WTC11 (cell line): ENCODE measurements at regions of chr4 and their contacts with region 1.

Region 1: DNA sequence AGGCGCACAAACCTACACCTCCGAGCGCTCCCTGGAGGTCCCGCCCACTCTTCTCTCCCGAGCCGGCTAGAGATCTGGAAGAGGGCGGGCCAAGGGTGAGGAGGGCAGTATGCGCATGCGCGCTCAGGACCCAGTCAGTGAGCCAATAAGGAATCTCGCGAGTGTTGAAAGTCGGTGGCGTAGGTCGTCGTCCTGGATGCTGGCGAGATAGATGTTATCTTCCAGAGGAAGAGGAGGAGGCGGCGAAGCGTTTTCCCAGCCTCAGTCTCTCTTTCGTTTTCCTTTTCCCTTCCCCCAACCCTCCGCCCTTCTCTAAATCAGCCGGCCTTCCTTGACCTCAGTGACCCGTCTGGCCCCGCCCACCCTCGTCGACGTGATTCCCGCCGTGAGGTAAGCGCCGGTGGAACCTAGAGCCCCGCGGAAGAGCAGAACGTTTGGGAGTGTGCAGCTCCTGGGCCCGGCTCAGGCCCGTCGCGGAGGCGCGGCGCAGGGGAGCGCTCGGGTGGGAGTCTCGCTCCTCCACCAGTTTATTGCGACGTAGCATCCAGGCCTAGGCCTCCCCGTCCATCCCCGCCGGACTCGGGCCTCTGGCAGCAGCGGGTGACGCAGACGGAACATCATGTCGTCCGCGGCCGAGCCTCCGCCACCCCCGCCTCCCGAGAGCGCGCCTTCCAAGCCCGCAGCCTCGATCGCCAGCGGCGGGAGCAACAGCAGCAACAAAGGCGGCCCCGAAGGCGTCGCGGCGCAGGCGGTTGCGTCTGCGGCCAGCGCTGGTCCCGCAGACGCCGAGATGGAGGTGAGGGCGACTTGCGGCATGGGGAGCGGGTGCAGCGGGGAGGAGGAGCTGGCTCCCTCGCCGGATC is at the start of gene SMARCA5:
- DNase-seq: peak; percentile 96
- ATAC-seq: peak; percentile 95
- H3K4me3 Mint-ChIP-seq: peak within 1 kb of the TSS; percentile 97
- H3K27ac Mint-ChIP-seq: peak within 1 kb of the TSS; percentile 99
- H3K4me1 Mint-ChIP-seq: peaks cover 18% of the 10 kb centered on the region
- H3K27me3 Mint-ChIP-seq: no peaks in the 10 kb centered on the region; the same call in 1 of the 2 replicates
- CTCF ChIP-seq: no peak
- total RNA-seq, gene SMARCA5: 89.6 to 98.8 TPM (median 91.1 TPM) in 3 replicates

Region 2: DNA sequence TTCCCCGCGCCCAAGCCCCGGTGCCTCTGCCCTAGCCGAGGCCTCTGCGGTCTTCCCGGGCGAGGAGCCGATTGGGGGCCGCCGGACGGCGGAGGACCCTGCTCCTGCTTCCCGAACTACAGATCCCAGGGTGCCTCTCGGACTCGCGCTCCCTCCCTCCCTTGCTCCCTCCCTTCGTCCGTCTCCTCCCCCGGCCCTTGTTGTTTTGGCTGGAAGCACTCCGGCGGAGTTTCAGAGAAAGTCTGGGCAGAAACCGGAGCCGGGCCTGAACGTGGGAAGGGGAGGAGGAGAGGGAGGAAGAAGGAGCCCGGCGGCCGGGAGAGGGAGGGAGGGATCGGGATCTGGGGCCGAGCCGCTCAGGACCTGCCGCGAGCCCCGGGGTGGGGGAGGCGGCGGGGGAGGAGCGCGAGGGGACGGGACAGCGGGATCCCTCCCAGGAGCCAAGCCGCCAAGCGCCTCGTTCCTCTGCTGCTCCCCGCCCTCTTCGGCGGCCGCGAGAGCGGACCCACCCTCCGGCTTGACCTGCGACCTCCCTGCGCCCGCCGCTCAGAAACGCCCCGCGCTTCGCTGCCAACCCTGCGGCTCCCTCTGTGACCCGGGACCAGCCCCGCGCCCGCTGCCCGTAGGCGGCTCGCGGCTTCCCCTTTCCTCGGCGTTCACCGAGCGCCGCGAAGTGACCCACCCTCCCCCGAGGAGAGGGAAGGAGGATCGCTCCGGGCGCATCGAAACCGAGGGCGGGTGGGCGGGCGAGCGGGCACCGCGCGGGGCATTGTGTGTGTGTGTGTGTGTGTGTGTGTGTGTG is 177.4 kb before region 1 on chr4:
- CTCF ChIA-PET with region 1: interaction called, 3 read pairs
- POLR2A ChIA-PET with region 1: interaction called, 18 read pairs
- DNase-seq: peak; percentile 92
- ATAC-seq: peak; percentile 89
- H3K4me3 Mint-ChIP-seq: peak overlapping the region; percentile 98
- H3K27ac Mint-ChIP-seq: peak overlapping the region; percentile 93
- H3K4me1 Mint-ChIP-seq: peaks cover 13% of the 10 kb centered on the region
- H3K27me3 Mint-ChIP-seq: no peaks in the 10 kb centered on the region; the same call in 1 of the 2 replicates
- CTCF ChIP-seq: no peak

Region 3: GRCh38 chr4:143473334-143474126 is 40.0 kb before region 1 on chr4:
- CTCF ChIA-PET with region 1: no interaction called
- POLR2A ChIA-PET with region 1: no interaction called
- DNase-seq: no peak
- ATAC-seq: no peak
- H3K4me3 Mint-ChIP-seq: no peak overlapping the region
- H3K27ac Mint-ChIP-seq: no peak overlapping the region
- H3K4me1 Mint-ChIP-seq: no peaks in the 10 kb centered on the region
- H3K27me3 Mint-ChIP-seq: no peaks in the 10 kb centered on the region
- CTCF ChIP-seq: no peak

Region 4: DNA sequence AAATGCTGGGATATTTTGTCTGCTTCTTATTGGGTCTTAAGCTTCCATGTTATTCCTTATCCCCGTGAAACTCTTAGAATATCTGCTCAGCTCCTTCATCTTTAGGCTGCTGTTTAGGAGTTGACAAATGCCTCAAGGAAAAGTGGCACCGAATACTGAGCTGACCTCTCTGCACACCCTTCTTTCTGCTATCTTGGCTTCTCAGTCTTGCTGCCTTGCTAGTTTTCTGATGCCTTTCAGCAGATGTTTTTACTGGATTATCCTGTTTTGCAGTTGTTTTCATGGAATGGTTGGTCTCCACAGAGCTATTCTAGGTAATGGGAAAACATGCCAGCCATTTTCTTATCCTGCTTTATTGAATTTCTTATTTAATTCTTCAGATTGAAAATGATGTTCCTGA is 305.5 kb after region 1 on chr4:
- CTCF ChIA-PET with region 1: no interaction called
- POLR2A ChIA-PET with region 1: no interaction called
- DNase-seq: no peak
- ATAC-seq: no peak
- H3K4me3 Mint-ChIP-seq: no peak overlapping the region
- H3K27ac Mint-ChIP-seq: no peak overlapping the region
- H3K4me1 Mint-ChIP-seq: peaks cover 24% of the 10 kb centered on the region
- H3K27me3 Mint-ChIP-seq: no peaks in the 10 kb centered on the region
- CTCF ChIP-seq: no peak